ENCODE measurements at regions of chr4 and their contacts with region 1.

Region 1: DNA sequence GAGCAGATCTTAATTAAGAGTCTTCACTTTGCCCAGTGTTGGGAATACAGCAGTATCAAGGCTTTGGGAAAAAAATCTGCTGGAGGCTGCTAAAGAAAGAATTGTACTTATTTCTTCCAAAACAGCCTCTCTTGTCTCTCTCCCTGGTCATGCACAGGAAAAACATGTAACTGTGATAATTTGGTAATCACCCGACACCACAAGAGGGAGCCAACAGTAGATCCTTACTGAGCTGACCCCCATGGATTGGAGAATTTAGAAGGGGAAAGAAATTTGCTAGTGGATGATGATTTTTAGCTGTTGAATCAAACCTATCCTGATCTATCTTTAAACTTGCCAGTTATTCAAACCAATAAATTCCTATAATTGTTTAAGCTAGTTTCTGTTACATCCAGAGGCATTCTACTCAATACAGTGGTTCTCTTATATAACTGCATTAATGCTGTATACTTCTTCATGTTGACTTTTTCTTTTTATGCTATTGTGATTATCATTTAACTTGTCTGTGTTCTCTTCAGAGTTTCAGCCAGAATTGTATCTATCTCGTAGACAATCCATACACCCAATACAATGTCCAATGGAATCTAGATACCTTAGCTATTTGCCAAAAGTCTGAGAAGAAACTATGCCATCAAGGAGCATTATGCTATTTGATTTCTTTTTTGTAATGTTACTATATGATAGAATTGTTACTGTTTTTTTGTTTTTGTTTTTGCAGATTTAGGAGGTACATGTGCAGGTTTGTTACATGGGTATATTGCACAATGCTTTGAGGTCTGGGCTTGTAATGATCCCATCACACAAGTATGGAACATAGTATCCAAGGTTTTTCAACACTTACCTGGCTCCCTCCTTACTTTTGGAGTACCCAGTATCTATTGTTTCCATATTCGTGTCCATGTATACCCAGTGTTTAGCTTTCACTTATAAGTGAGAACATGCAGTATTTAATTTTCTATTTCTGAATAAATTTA is 31.3 kb upstream of the ARHGEF38 start:
- DNase-seq: no peak
- H3K4me3 ChIP-seq: no peak overlapping the region
- H3K27ac ChIP-seq: no peak overlapping the region
- H3K4me1 ChIP-seq: no peaks in the 10 kb centered on the region
- H3K27me3 ChIP-seq: no peaks in the 10 kb centered on the region
- CTCF ChIP-seq: peak in 2 of 3 experiments; percentile 65 to 73; a peak in 3 of 4 replicates
- EP300 ChIP-seq: no peak
- POLR2A ChIP-seq: no peak
- RAD21 ChIP-seq: peak; percentile 78 to 80

Region 2: DNA sequence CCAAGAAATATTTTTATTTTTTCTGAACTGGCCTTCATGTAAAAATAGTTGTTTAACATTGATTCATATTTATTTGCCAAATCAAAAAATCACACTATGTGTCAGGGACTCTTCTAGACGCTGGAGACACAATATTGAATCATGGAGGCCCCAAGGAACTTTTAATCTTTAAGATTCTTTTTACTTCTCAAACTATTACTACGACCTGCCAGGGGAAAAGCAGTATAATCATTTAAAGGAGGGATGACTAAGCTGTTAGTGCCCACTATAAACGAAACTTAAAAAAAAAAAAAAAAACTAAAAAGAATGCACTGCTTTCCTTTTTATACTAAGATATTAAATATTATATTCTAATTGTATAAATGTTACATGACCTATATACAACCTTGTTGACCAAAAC is 131.9 kb before region 1 on chr4:
- CTCF ChIA-PET with region 1: no interaction called
- POLR2A ChIA-PET with region 1: no interaction called
- DNase-seq: no peak
- H3K4me3 ChIP-seq: no peak overlapping the region
- H3K27ac ChIP-seq: no peak overlapping the region
- H3K4me1 ChIP-seq: no peaks in the 10 kb centered on the region
- H3K27me3 ChIP-seq: no peaks in the 10 kb centered on the region
- CTCF ChIP-seq: no peak
- EP300 ChIP-seq: no peak
- POLR2A ChIP-seq: no peak
- RAD21 ChIP-seq: no peak

Region 3: DNA sequence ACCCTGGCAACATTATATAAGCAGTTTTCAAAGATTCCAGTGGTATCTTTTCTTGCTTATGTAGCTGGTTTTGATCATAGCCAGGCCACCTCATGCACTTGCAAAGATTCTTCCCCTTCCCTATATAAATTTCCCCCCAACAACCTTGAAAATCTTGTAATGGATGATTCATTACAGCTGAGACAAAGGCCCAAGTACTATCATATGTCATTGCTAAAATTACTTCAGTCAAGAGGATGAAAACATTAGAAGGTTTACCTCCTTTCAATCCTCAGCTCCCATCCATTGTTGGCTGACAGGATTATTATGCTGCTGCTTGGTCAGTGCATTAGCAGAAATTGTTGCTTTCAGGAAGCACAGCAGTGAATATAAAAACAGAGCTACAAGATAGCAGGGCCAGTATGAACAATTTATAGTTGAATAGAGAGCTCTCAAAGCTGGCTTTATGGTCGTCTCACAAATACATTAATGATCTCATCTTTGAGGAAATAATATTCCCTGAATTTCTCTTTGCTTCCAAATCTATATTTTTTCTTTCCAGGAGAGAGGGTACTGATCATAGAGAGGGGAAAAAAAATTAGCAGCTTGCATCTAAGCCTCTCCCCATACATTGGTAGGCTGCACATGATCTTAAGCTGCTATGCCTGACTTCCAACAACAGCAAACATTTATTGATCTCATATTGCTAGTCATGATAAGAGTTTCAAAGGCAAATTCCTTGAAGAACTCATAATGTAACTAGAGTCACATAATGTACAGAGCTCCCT is 23.6 kb after region 1 on chr4:
- CTCF ChIA-PET with region 1: interaction called, 10 read pairs
- POLR2A ChIA-PET with region 1: no interaction called
- DNase-seq: no peak
- H3K4me3 ChIP-seq: no peak overlapping the region
- H3K27ac ChIP-seq: no peak overlapping the region
- H3K4me1 ChIP-seq: no peaks in the 10 kb centered on the region
- H3K27me3 ChIP-seq: peaks cover 0 to 11% (median 3%) of the 10 kb centered on the region in 4 experiments; a peak in 2 of 7 replicates
- CTCF ChIP-seq: no peak
- EP300 ChIP-seq: no peak
- POLR2A ChIP-seq: no peak
- RAD21 ChIP-seq: no peak

Measured in H1 (cell line).